ENCODE measurements at regions of chr17 and their contacts with region 1.

Region 1: DNA sequence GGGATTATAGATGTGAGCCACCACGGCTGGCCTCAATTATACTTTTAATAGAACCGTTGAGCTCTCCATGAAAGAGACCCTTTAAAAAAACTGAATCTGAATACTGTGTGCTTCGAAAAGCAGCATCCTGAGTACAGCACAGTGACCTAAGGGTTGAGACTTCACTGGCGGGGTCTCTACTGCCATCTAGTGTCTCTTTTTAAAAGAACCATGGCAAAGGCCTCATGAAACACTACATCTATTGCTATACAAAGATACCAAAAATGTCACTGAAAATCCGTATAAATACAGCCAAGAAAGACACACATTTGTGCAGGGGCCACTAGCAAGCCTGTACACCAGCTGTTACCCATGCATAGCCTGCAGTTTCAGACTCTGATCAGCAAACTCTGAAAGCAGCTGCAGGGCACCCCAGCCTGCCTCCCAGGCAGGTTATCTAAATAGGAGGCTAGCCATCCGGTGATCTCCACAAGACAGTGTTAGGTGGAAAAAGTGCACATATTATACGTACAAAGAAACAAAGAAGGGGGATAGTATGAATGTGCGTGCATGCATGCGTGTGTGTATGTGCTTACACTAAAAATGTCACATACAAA is 35.3 kb downstream of the NPLOC4 start:
- DNase-seq: peak; percentile 50
- H3K4me3 ChIP-seq: no peak overlapping the region
- H3K27ac ChIP-seq: no peak overlapping the region
- H3K4me1 ChIP-seq: no peaks in the 10 kb centered on the region
- H3K27me3 ChIP-seq: no peaks in the 10 kb centered on the region
- CTCF ChIP-seq: peak; percentile 70

Region 2: DNA sequence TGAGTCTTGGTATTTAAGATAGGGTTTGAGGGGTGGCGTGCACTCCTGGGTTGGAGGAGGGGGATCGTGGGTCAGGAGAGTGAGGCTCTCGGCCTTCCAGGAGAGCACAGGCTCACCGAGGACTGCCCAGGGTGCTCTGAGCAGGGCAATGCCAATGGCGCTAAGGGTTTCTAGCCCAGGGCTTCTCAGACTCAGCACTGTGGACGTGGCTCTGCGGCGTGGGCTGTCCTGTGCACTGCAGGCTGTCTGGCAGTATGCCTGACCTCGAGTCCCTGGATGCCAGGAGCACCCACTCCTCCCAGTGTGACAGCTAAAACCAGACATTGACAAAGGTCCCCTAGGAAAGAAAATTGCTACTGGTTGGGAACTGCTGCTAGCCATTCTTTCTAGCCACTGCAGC is 1223.8 kb before region 1 on chr17:
- CTCF ChIA-PET with region 1: no interaction called
- POLR2A ChIA-PET with region 1: no interaction called
- intact Hi-C with region 1: no loop called
- DNase-seq: no peak
- H3K4me3 ChIP-seq: no peak overlapping the region
- H3K27ac ChIP-seq: no peak overlapping the region
- H3K4me1 ChIP-seq: no peaks in the 10 kb centered on the region
- H3K27me3 ChIP-seq: no peaks in the 10 kb centered on the region
- CTCF ChIP-seq: no peak

Region 3: GRCh38 chr17:81253358-81254131 is 348.1 kb before region 1 on chr17:
- CTCF ChIA-PET with region 1: no interaction called
- POLR2A ChIA-PET with region 1: interaction called, 3 read pairs
- intact Hi-C with region 1: loop called (anchors 1 kb)
- DNase-seq: peak in 1 of 2 experiments; percentile 51
- H3K4me3 ChIP-seq: no peak overlapping the region
- H3K27ac ChIP-seq: no peak overlapping the region
- H3K4me1 ChIP-seq: no peaks in the 10 kb centered on the region
- H3K27me3 ChIP-seq: no peaks in the 10 kb centered on the region
- CTCF ChIP-seq: peak; percentile 79

Region 4: GRCh38 chr17:81519284-81519955 is 82.2 kb before region 1 on chr17:
- CTCF ChIA-PET with region 1: interaction called, 5 read pairs
- POLR2A ChIA-PET with region 1: no interaction called
- intact Hi-C with region 1: loop called (anchors 1 kb)
- DNase-seq: peak; percentile 66 to 96
- H3K4me3 ChIP-seq: peak overlapping the region; percentile 65
- H3K27ac ChIP-seq: peak overlapping the region; percentile 45
- H3K4me1 ChIP-seq: peaks cover 25% of the 10 kb centered on the region
- H3K27me3 ChIP-seq: no peaks in the 10 kb centered on the region
- CTCF ChIP-seq: peak; percentile 64

Region 5: DNA sequence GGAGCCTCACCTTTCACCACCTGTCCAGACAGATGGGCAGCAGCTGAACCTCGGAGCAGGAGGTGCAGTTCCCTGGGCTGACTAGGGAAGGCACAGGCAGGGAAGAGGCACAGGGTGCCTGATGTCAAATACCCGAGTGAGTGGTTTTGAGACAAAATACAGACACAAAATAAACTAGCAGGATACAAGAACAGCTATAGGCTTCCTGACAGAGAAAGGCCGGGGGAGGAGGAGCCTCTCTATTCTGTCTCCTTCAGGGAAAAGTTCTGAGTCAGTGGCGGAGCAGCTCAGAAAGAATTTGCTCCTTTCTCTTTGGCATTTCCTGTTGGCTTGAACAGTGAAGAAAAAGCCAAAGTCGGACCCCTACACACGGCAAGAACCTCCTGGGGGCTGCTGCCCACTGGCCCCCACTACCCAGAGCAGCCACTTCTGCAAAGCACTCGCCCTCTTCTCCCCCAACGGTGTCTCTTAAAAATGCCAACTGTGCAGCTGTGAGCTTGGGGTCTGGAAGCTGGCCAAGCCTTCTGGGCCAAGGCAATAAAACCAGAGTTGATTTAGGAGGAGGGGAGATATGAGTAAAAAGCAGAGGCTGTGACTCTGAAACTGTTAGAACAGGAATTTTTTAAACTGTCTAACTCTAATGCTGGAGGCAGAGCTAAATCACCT is 35.0 kb before region 1 on chr17:
- CTCF ChIA-PET with region 1: no interaction called
- POLR2A ChIA-PET with region 1: interaction called, 20 read pairs
- intact Hi-C with region 1: loop called (anchors 1 kb)
- DNase-seq: peak; percentile 74 to 81
- H3K4me3 ChIP-seq: peak overlapping the region; percentile 34; the same call in 1 of the 2 replicates
- H3K27ac ChIP-seq: peak overlapping the region; percentile 63
- H3K4me1 ChIP-seq: peaks cover 47% of the 10 kb centered on the region
- H3K27me3 ChIP-seq: no peaks in the 10 kb centered on the region
- CTCF ChIP-seq: no peak

Region 6: GRCh38 chr17:81582341-81582740 is 19.3 kb before region 1 on chr17:
- CTCF ChIA-PET with region 1: no interaction called
- POLR2A ChIA-PET with region 1: interaction called, 10 read pairs
- intact Hi-C with region 1: no loop called
- DNase-seq: no peak
- H3K4me3 ChIP-seq: no peak overlapping the region
- H3K27ac ChIP-seq: no peak overlapping the region
- H3K4me1 ChIP-seq: peaks cover 16% of the 10 kb centered on the region
- H3K27me3 ChIP-seq: no peaks in the 10 kb centered on the region
- CTCF ChIP-seq: no peak

Region 7: GRCh38 chr17:81683584-81684237 is 82.1 kb after region 1 on chr17 and contains the starts of genes ARL16 and HGS:
- CTCF ChIA-PET with region 1: interaction called, 13 read pairs
- POLR2A ChIA-PET with region 1: no interaction called
- intact Hi-C with region 1: no loop called
- DNase-seq: peak; percentile 90 to 99
- H3K4me3 ChIP-seq: peak within 1 kb of the TSS; percentile 93
- H3K27ac ChIP-seq: peak within 1 kb of the TSS; percentile 78
- H3K4me1 ChIP-seq: peaks cover 5% of the 10 kb centered on the region
- H3K27me3 ChIP-seq: no peaks in the 10 kb centered on the region
- CTCF ChIP-seq: no peak
- total RNA-seq, gene ARL16: 41.7 and 48.3 TPM in 2 replicates
- total RNA-seq, gene HGS: 149 and 166 TPM in 2 replicates

Measured in PC-9 (cell line).